ENCODE measurements at regions of chr3 and their contacts with region 1.

Region 1: DNA sequence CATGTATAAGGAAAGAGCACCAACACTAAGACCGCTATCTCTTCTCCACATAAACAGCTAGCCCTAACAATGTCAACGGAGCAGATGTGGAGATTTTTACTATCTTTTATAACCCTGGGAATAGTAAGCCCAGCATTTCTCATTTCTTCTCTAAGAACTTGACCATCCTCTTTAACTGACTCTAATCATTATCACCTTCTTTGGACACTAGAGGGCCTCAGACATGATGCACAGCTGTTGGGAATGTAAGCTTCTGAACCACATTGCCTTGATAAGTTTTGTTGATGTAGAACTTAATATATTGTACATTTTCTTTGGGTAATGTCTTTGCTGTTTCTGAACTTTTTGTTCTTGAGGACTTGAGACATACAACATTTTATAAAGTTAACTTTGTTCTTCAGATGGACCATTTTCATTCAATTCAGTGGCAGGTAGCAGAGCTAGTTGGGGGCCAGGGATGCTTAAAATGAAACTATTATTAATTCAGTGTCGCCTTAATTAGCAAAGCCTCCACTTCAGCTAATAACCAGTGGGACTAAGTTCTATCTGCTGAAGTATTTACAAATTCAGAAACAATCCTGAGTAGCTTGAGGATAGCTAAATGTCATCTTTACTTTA is 9.6 kb upstream of the TAGLN3 start:
- DNase-seq: peak; percentile 82
- ATAC-seq: peak; percentile 96
- H3K4me3 ChIP-seq: no peak overlapping the region
- H3K27ac ChIP-seq: no peak overlapping the region
- H3K4me1 ChIP-seq: no peaks in the 10 kb centered on the region; the same call in 1 of the 2 replicates
- H3K27me3 ChIP-seq: no peaks in the 10 kb centered on the region
- CTCF ChIP-seq: peak; percentile 94

Region 2: DNA sequence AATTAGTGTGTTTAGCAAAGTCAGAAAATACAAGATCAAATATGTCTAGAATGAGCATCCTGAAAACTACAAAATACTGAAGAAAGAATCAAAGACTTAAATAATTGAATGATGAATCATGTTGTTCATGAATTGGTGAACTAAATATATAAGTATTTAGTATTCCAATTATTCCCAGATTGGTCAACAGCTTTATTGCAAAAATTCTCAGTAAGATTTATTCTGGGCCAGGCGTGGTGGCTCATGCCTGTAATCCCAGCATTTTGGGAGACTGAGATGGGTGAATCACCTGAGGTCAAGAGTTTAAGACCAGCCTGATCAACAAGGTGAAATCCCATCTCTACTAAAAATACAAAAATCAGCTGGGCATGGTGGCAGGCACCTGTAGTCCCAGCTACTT is 1167.6 kb before region 1 on chr3:
- CTCF ChIA-PET with region 1: no interaction called
- POLR2A ChIA-PET with region 1: no interaction called
- intact Hi-C with region 1: no loop called
- DNase-seq: peak; percentile 48
- ATAC-seq: no peak
- H3K4me3 ChIP-seq: no peak overlapping the region
- H3K27ac ChIP-seq: no peak overlapping the region
- H3K4me1 ChIP-seq: peaks cover 8% of the 10 kb centered on the region; the same call in 1 of the 2 replicates
- H3K27me3 ChIP-seq: no peaks in the 10 kb centered on the region
- CTCF ChIP-seq: no peak

Region 3: GRCh38 chr3:111978493-111979433 is 10.4 kb before region 1 on chr3 and contains the start of gene ABHD10:
- CTCF ChIA-PET with region 1: interaction called, 12 read pairs
- POLR2A ChIA-PET with region 1: no interaction called
- intact Hi-C with region 1: no loop called
- DNase-seq: peak; percentile 100
- ATAC-seq: peak; percentile 90
- H3K4me3 ChIP-seq: peak within 1 kb of the TSS; percentile 80
- H3K27ac ChIP-seq: peak within 1 kb of the TSS; percentile 36
- H3K4me1 ChIP-seq: peaks cover 28% of the 10 kb centered on the region
- H3K27me3 ChIP-seq: no peaks in the 10 kb centered on the region
- CTCF ChIP-seq: no peak
- total RNA-seq, gene ABHD10: 29.1 and 45.0 TPM in 2 replicates

Measured in PC-3 (cell line).